Heart left ventricle (tissue), 16 donors: ENCODE measurements at regions of chr11 and their contacts with region 1.

Region 1: GRCh38 chr11:114796954-114797721 is 118.8 kb downstream of the NXPE2 start:
- DNase-seq: peak in 3 of 5 donors; percentile 38 to 65 (median 54)
- ATAC-seq: peak; percentile 94 to 98 (median 96)
- H3K4me3 ChIP-seq: no peak overlapping the region
- H3K27ac ChIP-seq: peak overlapping the region in 11 of 12 donors; percentile 66 to 96 (median 77)
- H3K4me1 ChIP-seq: peaks cover 0 to 40% (median 8%) of the 10 kb centered on the region in 12 donors
- H3K27me3 ChIP-seq: peaks cover 0 to 4% (median 0%) of the 10 kb centered on the region in 9 donors
- CTCF ChIP-seq: no peak
- POLR2A ChIP-seq: no peak

Region 2: DNA sequence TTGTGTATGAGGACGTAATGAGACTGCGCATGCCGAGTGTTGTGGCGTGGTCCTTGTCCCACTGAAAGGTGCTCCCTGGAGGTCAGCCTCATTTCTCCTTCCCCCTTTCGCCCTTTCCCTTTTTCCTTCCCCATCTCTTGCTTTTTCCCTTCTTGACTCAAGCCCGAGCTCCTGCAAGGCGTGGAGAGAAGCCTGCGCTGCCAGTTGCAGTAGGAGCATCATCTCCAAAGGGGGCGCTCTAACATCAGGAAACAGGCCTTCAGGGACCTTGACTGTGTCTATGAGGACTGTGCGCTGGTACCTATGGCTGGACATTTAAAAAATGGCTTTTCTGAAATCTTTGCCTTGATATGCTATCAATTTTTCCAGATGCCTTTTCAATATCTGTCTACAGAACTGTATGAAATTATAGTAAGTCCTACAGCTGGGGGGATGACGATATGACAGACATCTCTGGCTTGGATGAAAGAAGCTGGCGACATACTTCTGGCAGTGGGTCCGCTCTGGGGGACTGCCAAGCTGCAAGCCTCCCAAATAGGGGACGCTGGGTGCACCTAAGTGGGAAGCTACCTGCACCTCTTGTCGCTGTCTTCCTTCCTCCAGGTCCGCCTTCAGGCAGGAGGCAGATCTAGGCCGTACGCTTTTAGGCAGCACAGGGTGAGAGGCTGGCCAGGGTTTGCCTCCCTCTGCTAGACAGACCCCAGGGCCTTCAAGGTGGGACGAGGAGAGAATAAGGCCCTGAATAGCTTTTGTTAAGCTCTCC is 22.4 kb before region 1 on chr11:
- intact Hi-C with region 1: no loop called
- DNase-seq: peak in 4 of 5 donors; percentile 21 to 35 (median 26)
- ATAC-seq: peak; percentile 71 to 86 (median 80)
- H3K4me3 ChIP-seq: no peak overlapping the region
- H3K27ac ChIP-seq: peak overlapping the region in 1 of 12 donors; percentile 39
- H3K4me1 ChIP-seq: peaks cover 0 to 15% (median 8%) of the 10 kb centered on the region in 12 donors
- H3K27me3 ChIP-seq: no peaks in the 10 kb centered on the region
- CTCF ChIP-seq: peak; percentile 40 to 74 (median 58)
- POLR2A ChIP-seq: no peak

Region 3: GRCh38 chr11:114892381-114893197 is 95.5 kb after region 1 on chr11:
- intact Hi-C with region 1: loop called in 2 of 10 experiments (anchors 2 to 5 kb)
- DNase-seq: no peak
- ATAC-seq: peak in 3 of 4 donors; percentile 34 to 53 (median 35)
- H3K4me3 ChIP-seq: no peak overlapping the region
- H3K27ac ChIP-seq: peak overlapping the region in 6 of 12 donors; percentile 14 to 68 (median 40)
- H3K4me1 ChIP-seq: peaks cover 0 to 21% (median 0%) of the 10 kb centered on the region in 12 donors
- H3K27me3 ChIP-seq: no peaks in the 10 kb centered on the region
- CTCF ChIP-seq: peak in 9 of 12 donors; percentile 11 to 57 (median 26)
- POLR2A ChIP-seq: no peak

Region 4: DNA sequence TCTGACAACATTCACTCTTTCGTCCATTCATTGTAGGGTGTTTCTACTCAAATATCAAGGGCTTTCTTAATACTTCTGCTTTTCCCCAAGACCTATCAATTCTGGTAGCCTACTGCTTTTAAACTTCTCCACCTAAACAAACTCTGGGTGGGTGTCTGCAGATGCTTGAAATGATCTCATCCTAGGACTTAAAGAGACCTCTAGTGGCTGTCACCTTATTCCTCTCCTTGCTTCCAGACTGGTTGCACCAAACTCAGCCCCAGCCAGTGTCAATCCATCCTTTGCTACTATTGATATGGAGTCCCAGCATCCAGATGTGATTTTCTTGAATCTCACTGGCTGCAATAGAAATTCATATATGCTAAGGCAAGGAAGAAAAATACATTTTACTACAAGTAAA is 155.9 kb after region 1 on chr11:
- intact Hi-C with region 1: loop called in 2 of 10 experiments (anchors 5 to 10 kb)
- DNase-seq: no peak
- ATAC-seq: peak; percentile 38 to 65 (median 56)
- H3K4me3 ChIP-seq: no peak overlapping the region
- H3K27ac ChIP-seq: no peak overlapping the region
- H3K4me1 ChIP-seq: no peaks in the 10 kb centered on the region
- H3K27me3 ChIP-seq: no peaks in the 10 kb centered on the region
- CTCF ChIP-seq: peak in 10 of 12 donors; percentile 5 to 47 (median 32)
- POLR2A ChIP-seq: no peak